Endothelial cell of umbilical vein (primary cell): ENCODE measurements at regions of chr1 and their contacts with region 1.

Region 1: GRCh38 chr1:231395076-231395995 is 26.8 kb downstream of the EGLN1 start:
- DNase-seq: peak; percentile 93
- H3K4me3 ChIP-seq: peak overlapping the region in 1 of 3 experiments; percentile 18
- H3K27ac ChIP-seq: peak overlapping the region; percentile 100
- H3K4me1 ChIP-seq: peaks cover 47% of the 10 kb centered on the region
- H3K27me3 ChIP-seq: no peaks in the 10 kb centered on the region
- CTCF ChIP-seq: no peak
- POLR2A ChIP-seq: peak; percentile 51

Region 2: GRCh38 chr1:231351816-231352215 is 43.5 kb before region 1 on chr1:
- CTCF ChIA-PET with region 1: no interaction called
- POLR2A ChIA-PET with region 1: no interaction called
- dilution Hi-C with region 1: no loop called
- intact Hi-C with region 1: loop called (anchors 1 kb)
- DNase-seq: peak; percentile 92
- H3K4me3 ChIP-seq: no peak overlapping the region
- H3K27ac ChIP-seq: peak overlapping the region; percentile 81
- H3K4me1 ChIP-seq: peaks cover 18% of the 10 kb centered on the region
- H3K27me3 ChIP-seq: no peaks in the 10 kb centered on the region
- CTCF ChIP-seq: no peak
- POLR2A ChIP-seq: no peak

Region 3: GRCh38 chr1:231407547-231408396 is 12.4 kb after region 1 on chr1:
- CTCF ChIA-PET with region 1: interaction called, 3 read pairs
- POLR2A ChIA-PET with region 1: no interaction called
- dilution Hi-C with region 1: no loop called
- intact Hi-C with region 1: loop called (anchors 1 kb)
- DNase-seq: peak; percentile 75
- H3K4me3 ChIP-seq: no peak overlapping the region
- H3K27ac ChIP-seq: peak overlapping the region; percentile 45
- H3K4me1 ChIP-seq: peaks cover 20% of the 10 kb centered on the region
- H3K27me3 ChIP-seq: no peaks in the 10 kb centered on the region
- CTCF ChIP-seq: no peak
- POLR2A ChIP-seq: no peak

Region 4: GRCh38 chr1:231618609-231619256 is 223.4 kb after region 1 on chr1:
- CTCF ChIA-PET with region 1: no interaction called
- POLR2A ChIA-PET with region 1: no interaction called
- dilution Hi-C with region 1: no loop called
- intact Hi-C with region 1: no loop called
- DNase-seq: peak; percentile 86
- H3K4me3 ChIP-seq: no peak overlapping the region
- H3K27ac ChIP-seq: no peak overlapping the region
- H3K4me1 ChIP-seq: peaks cover 9% of the 10 kb centered on the region
- H3K27me3 ChIP-seq: peaks cover 13 to 22% of the 10 kb centered on the region in 2 experiments
- CTCF ChIP-seq: no peak
- POLR2A ChIP-seq: no peak